GM13977 (cell line): ENCODE measurements at regions of chr1 and their contacts with region 1.

Region 1: DNA sequence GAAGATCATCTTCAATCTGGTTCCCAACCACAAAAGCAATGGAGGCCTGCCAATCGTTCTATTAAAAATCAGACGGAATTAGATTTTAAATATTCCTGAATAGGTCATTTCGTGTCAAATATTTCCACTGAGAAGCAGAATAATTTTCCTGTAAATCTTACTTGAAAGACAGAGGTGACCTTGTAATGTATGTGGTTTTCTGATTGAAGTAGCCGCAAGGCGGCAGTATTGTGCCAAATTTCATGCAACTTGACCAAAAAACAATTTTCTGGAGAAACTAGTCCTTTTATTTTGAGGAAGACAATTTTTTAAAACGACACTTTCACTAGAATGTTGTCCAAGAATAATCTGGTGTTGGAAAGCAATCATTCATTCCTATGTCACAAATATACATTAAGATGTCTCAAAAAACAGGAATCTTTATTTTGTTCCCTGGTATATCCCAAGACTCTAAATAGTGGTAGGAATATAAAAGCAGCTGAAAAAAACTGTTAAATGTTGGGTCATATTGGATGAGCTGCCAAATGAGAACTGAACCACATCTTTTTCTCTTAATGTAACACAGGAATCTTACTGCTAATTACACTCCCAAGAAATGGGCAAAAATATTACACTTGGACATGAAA is 33.6 kb downstream of the SPAG17 start:
- DNase-seq: peak; percentile 14
- CTCF ChIP-seq: peak; percentile 84

Region 2: GRCh38 chr1:119008483-119009311 is 857.3 kb after region 1 on chr1:
- in situ Hi-C with region 1: loop called (anchors 25 kb)
- DNase-seq: peak; percentile 77
- CTCF ChIP-seq: peak; percentile 54